Head of caudate nucleus (tissue), 42 donors: ENCODE measurements at regions of chr15 and their contacts with region 1.

Region 1: DNA sequence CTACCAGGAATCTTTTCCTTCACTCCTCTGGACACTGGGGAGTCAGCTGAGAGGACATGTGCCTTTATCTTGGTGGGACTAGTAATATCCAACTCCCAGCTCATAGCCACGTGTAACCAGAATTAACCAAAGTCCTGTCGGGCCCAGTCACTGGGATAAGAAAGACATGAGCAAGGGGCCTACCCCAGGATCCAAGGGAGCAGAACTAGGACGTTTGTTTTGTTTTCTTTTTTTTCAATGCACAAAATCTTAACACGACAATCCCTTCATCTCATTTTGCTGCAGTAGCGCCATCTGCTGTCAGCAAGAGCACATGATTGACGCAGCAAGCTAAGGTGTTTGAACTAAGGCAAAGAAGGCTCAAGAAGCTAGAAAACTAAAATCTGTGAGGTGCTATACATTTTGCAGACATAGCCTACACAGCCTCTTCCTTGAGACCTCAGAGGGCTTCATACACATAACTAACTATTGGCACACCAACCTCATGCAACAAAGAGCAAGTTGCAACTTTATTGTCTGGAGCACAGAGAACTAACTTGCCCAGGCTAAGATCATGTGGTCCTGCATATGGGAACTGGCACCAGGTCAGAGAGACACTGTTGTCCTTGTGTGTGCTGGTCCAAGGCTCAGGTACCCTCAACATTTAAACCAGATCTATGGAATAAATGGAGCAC is 43.6 kb downstream of the RLBP1 start:
- DNase-seq: peak in 41 of 42 donors; percentile 26 to 91 (median 74)

Region 2: DNA sequence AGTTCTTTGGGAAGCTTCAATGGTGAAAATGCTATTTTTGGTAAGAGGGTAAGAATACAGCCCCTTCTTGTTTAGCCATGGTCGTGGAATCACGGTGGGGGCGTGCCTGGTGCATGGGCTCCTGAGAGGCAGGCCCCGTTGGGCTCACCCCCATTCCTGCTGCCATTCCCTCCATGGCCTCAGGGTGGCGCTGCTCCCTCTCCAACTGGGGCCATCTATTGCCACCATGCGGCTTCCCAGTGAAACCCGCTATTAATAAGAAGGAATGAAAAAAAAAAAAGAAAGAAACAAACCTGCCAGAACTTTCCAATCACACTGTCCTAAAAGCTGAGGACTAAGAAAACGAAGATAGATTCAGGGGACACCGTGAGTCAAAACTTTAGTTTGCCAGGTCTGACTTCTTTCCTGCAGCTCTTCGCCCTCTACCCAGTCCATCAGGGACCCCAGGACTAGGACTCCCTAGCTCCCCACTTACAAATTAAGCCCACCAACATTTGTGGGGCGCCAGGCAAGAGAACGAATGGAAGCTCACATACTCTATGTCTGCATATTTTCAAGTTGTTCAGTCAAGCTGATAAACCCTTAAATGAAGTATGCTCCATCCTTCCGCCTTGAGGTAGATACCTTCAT is 120.2 kb before region 1 on chr15:
- intact Hi-C with region 1: loop called (anchors 5 kb)
- DNase-seq: peak; percentile 54 to 95 (median 85)

Region 3: GRCh38 chr15:89358755-89359439 is 181.1 kb after region 1 on chr15:
- intact Hi-C with region 1: no loop called
- DNase-seq: peak in 41 of 42 donors; percentile 67 to 92 (median 82)